Esophagus muscularis mucosa (tissue), 4 donors: ENCODE measurements at regions of chr20 and their contacts with region 1.

Region 1: GRCh38 chr20:44310664-44311639 is at the start of gene FITM2:
- DNase-seq: peak; percentile 99
- H3K4me3 ChIP-seq: peak within 1 kb of the TSS; percentile 75 to 97 (median 78)
- H3K27ac ChIP-seq: peak within 1 kb of the TSS; percentile 71 to 76 (median 74)
- H3K4me1 ChIP-seq: peaks cover 13 to 33% (median 23%) of the 10 kb centered on the region in 4 donors
- H3K27me3 ChIP-seq: no peaks in the 10 kb centered on the region
- CTCF ChIP-seq: peak; percentile 95 to 98 (median 98)
- EP300 ChIP-seq: no peak
- POLR2A ChIP-seq: no peak
- total RNA-seq, gene FITM2: 7.0 to 11.1 (median 8.3) TPM

Region 2: DNA sequence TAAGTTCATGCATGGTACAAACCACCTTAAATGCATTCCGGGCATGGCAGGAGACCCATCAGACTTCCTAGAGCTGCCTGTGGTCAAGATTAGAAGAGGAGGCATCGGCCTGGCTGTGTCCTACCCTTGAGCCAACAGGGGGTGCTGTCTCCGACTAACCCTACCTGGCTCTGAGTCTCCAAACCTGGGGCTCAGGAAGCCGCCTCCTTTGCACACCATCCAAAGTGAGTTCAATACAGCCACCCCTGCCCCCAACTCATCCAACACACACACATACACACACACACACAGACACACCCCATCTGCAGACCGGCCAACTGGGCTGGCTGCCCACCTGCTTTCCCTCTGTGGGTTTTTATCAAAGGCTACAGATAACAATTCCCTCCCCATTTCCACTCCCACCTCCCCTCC is 201.0 kb before region 1 on chr20:
- intact Hi-C with region 1: loop called (anchors 10 kb)
- DNase-seq: no peak
- H3K4me3 ChIP-seq: no peak overlapping the region
- H3K27ac ChIP-seq: peak overlapping the region in 3 of 4 donors; percentile 12 to 81 (median 27)
- H3K4me1 ChIP-seq: peaks cover 8 to 49% (median 47%) of the 10 kb centered on the region in 4 donors
- H3K27me3 ChIP-seq: no peaks in the 10 kb centered on the region
- CTCF ChIP-seq: peak in 1 of 3 experiments; percentile 19
- EP300 ChIP-seq: no peak
- POLR2A ChIP-seq: no peak